Calu3 (cell line): ENCODE measurements at regions of chr4 and their contacts with region 1.

Region 1: GRCh38 chr4:149549911-149550310 is 265.7 kb downstream of the IQCM start:
- DNase-seq: no peak
- H3K4me3 Mint-ChIP-seq: no peak overlapping the region
- H3K27ac Mint-ChIP-seq: no peak overlapping the region
- H3K4me1 Mint-ChIP-seq: no peaks in the 10 kb centered on the region
- H3K27me3 Mint-ChIP-seq: no peaks in the 10 kb centered on the region
- CTCF ChIP-seq: no peak

Region 2: DNA sequence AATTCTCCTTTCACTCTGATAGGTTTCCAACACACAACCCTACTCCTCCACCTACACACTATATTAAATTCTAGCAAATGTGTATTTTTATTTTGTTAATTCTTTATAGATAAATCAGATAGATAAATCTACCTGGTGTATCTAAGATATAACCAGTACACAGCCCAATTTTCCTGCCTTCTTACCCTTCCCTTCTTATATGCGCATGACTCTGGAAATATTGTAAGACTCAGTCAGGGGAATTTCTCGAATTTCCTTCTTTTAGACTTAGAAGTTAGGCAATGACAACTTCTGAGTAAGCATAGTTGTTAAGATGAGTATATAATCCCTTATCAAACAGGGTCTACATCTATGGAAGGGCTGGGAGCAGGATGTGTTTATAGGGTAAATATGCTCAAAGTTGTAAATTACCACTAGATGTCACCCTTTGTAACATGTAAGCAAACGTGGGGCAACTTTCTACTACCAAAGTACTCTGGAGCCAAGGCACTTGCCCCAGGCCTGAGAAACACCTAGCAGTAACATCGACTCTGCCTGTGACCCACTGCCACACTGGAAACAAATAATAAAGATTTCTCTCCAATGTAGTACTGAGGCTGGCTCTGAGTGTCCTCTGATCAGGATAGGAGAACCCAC is 179.0 kb before region 1 on chr4:
- CTCF ChIA-PET with region 1: no interaction called
- intact Hi-C with region 1: loop called (anchors 10 kb)
- DNase-seq: peak; percentile 17
- H3K4me3 Mint-ChIP-seq: no peak overlapping the region
- H3K27ac Mint-ChIP-seq: no peak overlapping the region
- H3K4me1 Mint-ChIP-seq: no peaks in the 10 kb centered on the region
- H3K27me3 Mint-ChIP-seq: no peaks in the 10 kb centered on the region
- CTCF ChIP-seq: peak; percentile 18